Calu3 (cell line): ENCODE measurements at regions of chr6 and their contacts with region 1.

Region 1: GRCh38 chr6:79777713-79778579 is 146.8 kb downstream of the SH3BGRL2 start:
- DNase-seq: peak; percentile 91
- H3K4me3 Mint-ChIP-seq: peak overlapping the region; percentile 64
- H3K27ac Mint-ChIP-seq: no peak overlapping the region
- H3K4me1 Mint-ChIP-seq: no peaks in the 10 kb centered on the region
- H3K27me3 Mint-ChIP-seq: no peaks in the 10 kb centered on the region
- CTCF ChIP-seq: peak; percentile 98

Region 2: GRCh38 chr6:79813854-79814709 is 36.1 kb after region 1 on chr6:
- CTCF ChIA-PET with region 1: interaction called, 4 read pairs
- intact Hi-C with region 1: loop called (anchors 1 kb)
- DNase-seq: peak; percentile 82
- H3K4me3 Mint-ChIP-seq: no peak overlapping the region
- H3K27ac Mint-ChIP-seq: no peak overlapping the region
- H3K4me1 Mint-ChIP-seq: no peaks in the 10 kb centered on the region
- H3K27me3 Mint-ChIP-seq: no peaks in the 10 kb centered on the region
- CTCF ChIP-seq: peak; percentile 67

Region 3: GRCh38 chr6:80094017-80094416 is 316.1 kb after region 1 on chr6:
- CTCF ChIA-PET with region 1: no interaction called
- intact Hi-C with region 1: loop called (anchors 10 kb)
- DNase-seq: peak; percentile 4
- H3K4me3 Mint-ChIP-seq: no peak overlapping the region
- H3K27ac Mint-ChIP-seq: no peak overlapping the region
- H3K4me1 Mint-ChIP-seq: no peaks in the 10 kb centered on the region
- H3K27me3 Mint-ChIP-seq: no peaks in the 10 kb centered on the region
- CTCF ChIP-seq: peak; percentile 38